ENCODE measurements at regions of chr13 and their contacts with region 1.

Region 1: GRCh38 chr13:51797664-51798488 is 6.1 kb downstream of the DHRS12 start:
- DNase-seq: peak; percentile 76
- H3K4me3 ChIP-seq: no peak overlapping the region
- H3K27ac ChIP-seq: peak overlapping the region in 1 of 2 experiments; percentile 50; a peak in 1 of 4 replicates
- H3K4me1 ChIP-seq: peaks cover 19 to 44% of the 10 kb centered on the region in 2 experiments
- H3K27me3 ChIP-seq: no peaks in the 10 kb centered on the region
- CTCF ChIP-seq: peak; percentile 59
- EP300 ChIP-seq: no peak
- RAD21 ChIP-seq: peak; percentile 93

Region 2: DNA sequence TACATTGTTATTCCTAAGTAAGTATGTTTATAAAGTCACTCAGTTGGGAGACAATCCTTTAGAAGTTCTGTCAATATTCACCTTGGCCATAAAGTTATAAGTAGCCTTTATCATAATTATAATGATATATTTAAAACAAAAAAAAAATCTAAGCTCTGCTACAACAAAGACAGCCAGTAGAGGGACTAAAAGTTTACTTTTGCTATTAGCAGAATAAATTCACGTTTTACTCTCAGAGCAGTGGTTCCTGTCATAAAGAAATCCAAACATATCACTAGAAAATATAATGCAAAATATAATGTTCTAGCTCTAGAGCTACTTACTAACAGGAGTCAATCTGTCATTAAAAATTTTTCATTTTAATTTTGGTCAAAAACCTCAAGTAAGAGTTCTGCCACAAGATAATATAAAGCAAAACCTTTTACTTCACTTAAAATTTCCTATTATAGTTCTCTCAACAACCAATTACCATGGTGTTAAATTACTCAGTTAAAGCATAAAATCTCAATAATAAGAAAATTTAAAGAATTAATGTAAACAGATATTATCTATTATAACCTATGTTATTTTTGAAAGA is 362.8 kb before region 1 on chr13:
- CTCF ChIA-PET with region 1: interaction called, 40 read pairs
- POLR2A ChIA-PET with region 1: interaction called, 4 read pairs
- DNase-seq: peak; percentile 21
- H3K4me3 ChIP-seq: no peak overlapping the region
- H3K27ac ChIP-seq: no peak overlapping the region
- H3K4me1 ChIP-seq: peaks cover 0 to 10% of the 10 kb centered on the region in 2 experiments; a peak in 3 of 4 replicates
- H3K27me3 ChIP-seq: no peaks in the 10 kb centered on the region
- CTCF ChIP-seq: peak; percentile 81
- EP300 ChIP-seq: no peak
- RAD21 ChIP-seq: peak; percentile 76

Region 3: DNA sequence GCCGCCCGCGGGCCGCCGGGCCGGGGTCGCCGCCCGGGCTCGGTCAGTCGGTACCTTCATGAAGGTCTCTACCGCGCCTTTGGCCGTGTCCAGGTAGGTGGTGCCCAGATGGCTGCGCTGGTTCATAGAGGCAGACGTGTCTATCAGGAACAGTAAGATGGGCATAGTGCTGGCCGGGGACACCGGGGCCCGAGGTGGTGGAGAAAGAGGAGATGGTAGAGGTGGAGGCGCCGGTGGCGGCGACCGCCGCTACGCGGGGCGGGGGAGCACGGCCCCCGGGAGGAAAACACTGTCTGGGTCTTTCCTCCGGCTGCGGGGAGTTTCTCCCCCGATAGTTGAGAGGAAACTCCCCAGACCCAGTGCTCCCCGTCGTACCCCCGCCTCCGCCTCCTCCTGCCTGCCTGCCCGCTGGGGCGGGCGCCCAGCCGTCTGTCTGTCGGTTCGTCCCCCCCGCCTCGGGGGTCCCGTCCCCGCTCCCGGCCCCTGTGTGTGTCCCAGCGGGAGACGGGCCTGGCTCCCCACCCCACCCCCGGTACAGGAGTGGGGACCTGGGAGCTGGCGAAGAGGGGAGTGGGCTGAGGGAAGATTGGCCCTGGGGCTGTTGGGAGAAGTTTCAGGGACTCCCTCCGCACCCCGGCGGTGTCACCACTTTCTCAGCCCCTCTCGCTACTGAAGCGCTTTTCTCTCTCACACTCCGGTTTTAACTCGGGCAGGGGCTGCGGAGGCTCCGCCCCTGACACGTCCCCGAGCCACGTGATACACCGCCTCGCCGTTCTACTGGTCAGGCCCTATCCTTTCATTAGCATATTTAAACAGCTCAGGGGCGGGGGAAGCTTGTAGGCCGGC is 345.3 kb before region 1 on chr13 and contains the start of gene INTS6:
- CTCF ChIA-PET with region 1: interaction called, 12 read pairs
- POLR2A ChIA-PET with region 1: interaction called, 26 read pairs
- DNase-seq: no peak
- H3K4me3 ChIP-seq: peak within 1 kb of the TSS; percentile 79 to 90
- H3K27ac ChIP-seq: peak within 1 kb of the TSS; percentile 90 to 97
- H3K4me1 ChIP-seq: peaks cover 5 to 7% of the 10 kb centered on the region in 2 experiments; a peak in 3 of 4 replicates
- H3K27me3 ChIP-seq: no peaks in the 10 kb centered on the region
- CTCF ChIP-seq: no peak
- EP300 ChIP-seq: peak in 1 of 2 experiments; percentile 7; a peak in 1 of 4 replicates
- RAD21 ChIP-seq: peak; percentile 27; the same call in 1 of the 2 replicates
- polyA plus RNA-seq, gene INTS6: 7.7 and 9.1 TPM in 2 replicates

Region 4: GRCh38 chr13:51590971-51591627 is 206.8 kb before region 1 on chr13:
- CTCF ChIA-PET with region 1: interaction called, 25 read pairs
- POLR2A ChIA-PET with region 1: no interaction called
- DNase-seq: peak; percentile 41
- H3K4me3 ChIP-seq: peak overlapping the region; percentile 9 to 24; a peak in 3 of 4 replicates
- H3K27ac ChIP-seq: peak overlapping the region; percentile 78 to 84
- H3K4me1 ChIP-seq: peaks cover 32 to 37% of the 10 kb centered on the region in 2 experiments; a peak in 3 of 4 replicates
- H3K27me3 ChIP-seq: no peaks in the 10 kb centered on the region
- CTCF ChIP-seq: 0 out of 2 replicates have a peak, but pooled peaks have one; percentile 7
- EP300 ChIP-seq: peak; percentile 49 to 90; a peak in 3 of 4 replicates
- RAD21 ChIP-seq: peak; percentile 37

Region 5: DNA sequence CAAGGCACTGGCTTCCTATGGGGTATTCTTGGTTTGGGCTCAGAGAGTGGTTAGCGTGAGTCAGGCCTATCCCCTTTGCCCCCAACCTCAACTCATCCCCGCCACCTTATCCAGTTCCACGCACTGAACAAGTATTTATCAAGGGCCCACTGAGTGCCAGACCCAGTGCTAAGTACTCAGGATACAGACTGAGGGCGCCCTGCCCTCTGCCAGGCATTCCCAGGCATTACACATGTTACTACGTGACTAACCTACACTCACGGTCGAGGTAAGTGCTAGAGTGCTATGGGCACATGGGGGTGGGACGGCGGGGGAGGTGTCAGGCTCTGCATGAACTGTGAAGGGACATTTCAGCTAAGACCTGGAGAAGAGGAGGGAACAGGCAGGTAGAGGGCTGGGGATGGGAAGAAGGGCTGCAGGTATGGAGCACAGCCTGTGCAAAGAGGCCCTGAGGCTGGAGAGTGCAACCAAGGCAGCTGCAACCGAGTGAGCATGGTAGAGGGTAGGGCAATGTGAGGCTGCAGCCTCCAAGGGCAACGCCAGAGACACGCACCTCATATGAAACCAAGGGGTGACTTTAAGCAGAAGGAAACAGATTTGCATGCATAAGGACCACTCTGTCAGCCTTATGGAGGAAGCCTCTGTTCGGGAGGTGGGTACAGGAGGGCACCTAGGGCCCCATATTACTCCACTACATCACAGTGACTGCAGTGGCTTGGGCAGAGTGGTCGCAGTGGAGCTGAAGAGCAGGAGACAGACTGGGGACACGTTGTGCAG is 16.4 kb before region 1 on chr13:
- CTCF ChIA-PET with region 1: interaction called, 80 read pairs
- POLR2A ChIA-PET with region 1: interaction called, 30 read pairs
- DNase-seq: peak; percentile 63
- H3K4me3 ChIP-seq: no peak overlapping the region
- H3K27ac ChIP-seq: no peak overlapping the region; a peak in 1 of 4 replicates
- H3K4me1 ChIP-seq: peaks cover 10 to 41% of the 10 kb centered on the region in 2 experiments
- H3K27me3 ChIP-seq: no peaks in the 10 kb centered on the region
- CTCF ChIP-seq: peak; percentile 49
- EP300 ChIP-seq: no peak
- RAD21 ChIP-seq: peak; percentile 61